WTC11 (cell line): ENCODE measurements at regions of chr22 and their contacts with region 1.

Region 1: DNA sequence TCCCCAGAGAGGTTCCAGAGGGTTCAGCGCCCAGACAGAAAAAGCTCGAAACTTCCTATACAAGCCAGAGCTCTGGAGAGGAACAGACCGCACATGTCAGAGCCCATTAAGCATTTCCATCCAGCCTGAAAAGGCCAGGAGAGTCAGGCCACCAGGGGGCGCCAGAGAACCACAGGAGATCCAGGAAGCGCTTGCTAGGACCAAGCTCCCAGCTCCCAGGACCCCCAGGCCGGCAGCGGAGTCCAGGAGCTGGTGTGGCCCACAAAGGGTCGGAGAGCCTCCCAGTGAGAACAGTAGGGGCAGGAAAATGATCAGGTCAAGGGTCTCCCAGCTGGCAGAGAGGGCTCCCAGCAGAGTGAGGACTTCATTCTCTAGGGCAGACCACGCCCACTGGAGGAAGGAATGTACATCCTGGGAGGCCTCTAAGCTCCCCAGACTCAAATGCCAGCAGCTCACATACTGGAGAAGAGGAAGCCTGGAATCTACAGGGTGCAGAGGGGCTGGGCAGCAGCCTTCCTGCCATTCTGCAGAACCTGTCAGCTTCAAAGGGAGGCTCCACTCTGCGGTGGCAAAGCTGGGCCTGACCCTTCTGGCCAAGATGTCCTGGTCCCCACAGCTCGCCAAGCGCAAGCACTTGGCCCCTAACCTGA is 2.1 kb upstream of the MEI1 start:
- DNase-seq: peak; percentile 98
- ATAC-seq: peak; percentile 87
- H3K4me3 Mint-ChIP-seq: peak overlapping the region; percentile 52
- H3K27ac Mint-ChIP-seq: no peak overlapping the region
- H3K4me1 Mint-ChIP-seq: peaks cover 10% of the 10 kb centered on the region
- H3K27me3 Mint-ChIP-seq: peaks cover 28% of the 10 kb centered on the region
- CTCF ChIP-seq: peak; percentile 99

Region 2: DNA sequence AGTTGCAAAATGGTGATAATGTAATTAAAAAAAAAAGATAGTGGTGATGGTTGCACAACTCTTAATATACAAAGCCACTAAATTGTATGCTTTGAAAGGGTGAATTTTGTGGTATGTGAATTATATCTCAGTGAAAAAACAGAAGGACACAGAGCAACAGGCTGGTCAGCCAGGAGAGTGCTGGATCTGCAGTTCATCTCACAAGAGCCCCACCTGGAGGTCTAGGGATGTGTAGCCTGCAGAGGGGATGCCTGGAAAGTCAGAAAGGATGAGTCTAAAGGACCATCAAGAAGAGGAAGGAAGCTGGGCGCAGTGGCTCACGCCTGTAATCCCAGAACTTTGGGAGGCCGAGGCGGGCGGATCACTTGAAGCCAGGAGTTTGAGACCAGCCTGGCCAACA is 162.0 kb before region 1 on chr22:
- CTCF ChIA-PET with region 1: no interaction called
- POLR2A ChIA-PET with region 1: no interaction called
- DNase-seq: peak; percentile 42
- ATAC-seq: peak; percentile 62
- H3K4me3 Mint-ChIP-seq: no peak overlapping the region
- H3K27ac Mint-ChIP-seq: no peak overlapping the region
- H3K4me1 Mint-ChIP-seq: peaks cover 11% of the 10 kb centered on the region
- H3K27me3 Mint-ChIP-seq: no peaks in the 10 kb centered on the region
- CTCF ChIP-seq: no peak

Region 3: DNA sequence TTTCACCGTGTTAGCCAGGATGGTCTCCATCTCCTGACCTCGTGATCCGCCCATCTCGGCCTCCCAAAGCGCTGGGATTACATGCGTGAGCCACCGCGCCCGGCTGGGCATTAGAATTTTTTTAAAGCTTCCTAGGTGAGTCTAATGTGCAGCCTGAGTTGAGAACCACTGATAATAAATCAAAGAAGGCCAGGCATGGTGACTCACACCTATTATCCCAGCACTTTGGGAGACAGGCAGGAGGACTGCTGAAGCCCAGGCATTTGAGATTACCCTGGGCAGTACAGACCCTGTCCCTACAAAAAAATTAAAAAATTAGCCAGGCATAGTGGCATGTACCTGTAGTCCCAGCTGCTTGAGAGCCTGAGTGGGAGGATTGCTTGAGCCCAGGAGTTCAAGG is 15.8 kb after region 1 on chr22:
- CTCF ChIA-PET with region 1: interaction called, 25 read pairs
- POLR2A ChIA-PET with region 1: interaction called, 3 read pairs
- DNase-seq: no peak
- ATAC-seq: no peak
- H3K4me3 Mint-ChIP-seq: no peak overlapping the region
- H3K27ac Mint-ChIP-seq: no peak overlapping the region
- H3K4me1 Mint-ChIP-seq: no peaks in the 10 kb centered on the region
- H3K27me3 Mint-ChIP-seq: peaks cover 31% of the 10 kb centered on the region
- CTCF ChIP-seq: no peak

Region 4: DNA sequence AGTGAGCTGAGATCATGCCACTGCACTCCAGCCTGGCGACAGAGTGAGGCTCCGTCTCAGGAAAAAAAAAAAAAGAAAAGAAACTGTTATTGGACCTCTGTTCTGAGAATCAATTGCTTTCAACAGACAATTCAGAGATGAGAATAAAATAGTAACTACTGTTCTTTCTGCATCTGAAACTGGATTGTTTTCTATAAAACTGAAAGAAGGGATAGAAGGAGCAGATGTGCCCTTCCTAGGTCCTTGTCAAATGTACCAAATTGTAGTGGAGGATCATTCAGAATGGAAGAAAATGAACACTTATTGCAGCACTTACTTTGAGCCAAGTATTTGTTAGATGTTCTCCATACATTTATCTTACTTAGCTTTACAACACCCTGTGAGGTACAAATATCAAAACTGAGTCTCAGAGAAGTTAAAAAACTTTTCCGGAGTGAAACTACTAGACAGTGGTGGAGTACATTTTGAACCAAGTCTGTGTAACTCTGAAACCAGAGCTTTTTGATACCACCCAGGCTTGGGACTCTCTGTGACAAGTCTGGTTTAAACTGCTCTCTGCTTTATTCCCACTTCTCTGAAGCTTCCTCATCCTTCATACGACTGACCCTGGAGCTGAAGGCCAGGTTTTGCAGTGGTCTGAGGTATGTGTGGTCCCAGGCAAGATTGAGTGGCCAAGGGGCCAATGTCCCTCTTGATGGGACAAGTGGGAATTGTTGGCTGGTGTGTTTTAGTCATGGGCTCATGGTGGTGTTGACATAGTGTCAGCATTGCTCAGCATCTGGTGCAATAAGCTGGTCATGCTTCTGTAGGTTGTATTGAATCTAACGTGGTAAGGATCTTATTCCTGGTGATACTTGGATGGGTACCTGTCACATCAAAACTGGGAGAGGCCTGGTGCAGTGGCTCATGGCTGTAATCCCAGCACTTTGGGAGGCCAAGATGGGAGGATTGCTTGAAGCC is 55.0 kb after region 1 on chr22:
- CTCF ChIA-PET with region 1: interaction called, 69 read pairs
- POLR2A ChIA-PET with region 1: no interaction called
- DNase-seq: no peak
- ATAC-seq: no peak
- H3K4me3 Mint-ChIP-seq: no peak overlapping the region
- H3K27ac Mint-ChIP-seq: no peak overlapping the region
- H3K4me1 Mint-ChIP-seq: peaks cover 14% of the 10 kb centered on the region
- H3K27me3 Mint-ChIP-seq: no peaks in the 10 kb centered on the region; the same call in 1 of the 2 replicates
- CTCF ChIP-seq: no peak

Region 5: GRCh38 chr22:41800348-41801146 is 103.3 kb after region 1 on chr22 and contains the start of gene CCDC134:
- CTCF ChIA-PET with region 1: interaction called, 76 read pairs
- POLR2A ChIA-PET with region 1: interaction called, 8 read pairs
- DNase-seq: peak; percentile 91
- ATAC-seq: peak; percentile 95
- H3K4me3 Mint-ChIP-seq: peak within 1 kb of the TSS; percentile 96
- H3K27ac Mint-ChIP-seq: peak within 1 kb of the TSS; percentile 98
- H3K4me1 Mint-ChIP-seq: peaks cover 30% of the 10 kb centered on the region
- H3K27me3 Mint-ChIP-seq: no peaks in the 10 kb centered on the region
- CTCF ChIP-seq: no peak
- total RNA-seq, gene CCDC134: 19.0 to 21.3 TPM (median 19.2 TPM) in 3 replicates

Region 6: DNA sequence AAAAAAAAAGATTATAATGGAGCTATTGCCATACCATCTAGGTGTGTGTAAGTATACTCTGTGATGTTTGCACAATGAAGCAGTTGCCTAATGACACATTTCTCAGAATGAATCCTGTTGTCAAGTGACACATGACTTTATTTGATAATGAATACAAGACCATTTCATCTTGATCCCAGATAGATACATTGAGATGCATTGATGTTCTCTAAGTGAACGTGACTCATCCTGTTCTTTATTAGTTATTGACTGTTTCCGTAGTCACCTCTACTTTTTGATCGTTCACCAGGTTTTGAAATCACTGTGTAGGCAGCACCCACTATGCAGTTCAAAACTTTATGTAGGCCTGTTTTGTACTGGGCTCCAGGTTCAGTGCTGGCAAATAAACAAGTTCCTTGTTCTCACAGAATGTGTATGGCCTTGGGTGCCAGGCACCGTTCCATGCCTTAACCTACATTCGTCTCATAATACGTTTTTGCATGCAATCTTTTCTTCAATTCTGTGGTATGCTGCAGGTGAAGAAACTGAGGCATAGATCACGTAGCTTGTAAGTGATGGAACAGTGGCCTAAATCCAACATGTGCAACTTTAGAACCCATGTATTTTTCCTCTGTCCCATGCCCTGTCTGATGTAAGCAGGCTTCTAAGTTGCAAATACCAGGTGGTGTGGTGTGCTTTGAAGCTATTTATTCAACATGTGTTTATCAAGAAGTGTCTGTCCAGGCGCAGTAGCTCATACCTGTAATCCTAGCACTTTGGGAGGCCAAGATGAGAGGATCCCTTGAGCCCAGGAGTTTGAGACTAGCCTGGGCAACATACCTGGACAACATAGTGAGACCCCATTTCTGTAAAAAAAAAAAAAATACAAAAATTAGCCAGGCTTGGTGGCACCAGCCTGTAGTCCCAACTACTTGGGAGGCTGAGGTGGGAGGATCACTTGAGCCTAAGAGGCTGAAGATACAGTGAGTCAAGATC is 146.0 kb after region 1 on chr22:
- CTCF ChIA-PET with region 1: interaction called, 10 read pairs
- POLR2A ChIA-PET with region 1: no interaction called
- DNase-seq: no peak
- ATAC-seq: no peak
- H3K4me3 Mint-ChIP-seq: no peak overlapping the region
- H3K27ac Mint-ChIP-seq: peak overlapping the region; percentile 17; the same call in 1 of the 2 replicates
- H3K4me1 Mint-ChIP-seq: peaks cover 65% of the 10 kb centered on the region
- H3K27me3 Mint-ChIP-seq: no peaks in the 10 kb centered on the region
- CTCF ChIP-seq: no peak

Region 7: DNA sequence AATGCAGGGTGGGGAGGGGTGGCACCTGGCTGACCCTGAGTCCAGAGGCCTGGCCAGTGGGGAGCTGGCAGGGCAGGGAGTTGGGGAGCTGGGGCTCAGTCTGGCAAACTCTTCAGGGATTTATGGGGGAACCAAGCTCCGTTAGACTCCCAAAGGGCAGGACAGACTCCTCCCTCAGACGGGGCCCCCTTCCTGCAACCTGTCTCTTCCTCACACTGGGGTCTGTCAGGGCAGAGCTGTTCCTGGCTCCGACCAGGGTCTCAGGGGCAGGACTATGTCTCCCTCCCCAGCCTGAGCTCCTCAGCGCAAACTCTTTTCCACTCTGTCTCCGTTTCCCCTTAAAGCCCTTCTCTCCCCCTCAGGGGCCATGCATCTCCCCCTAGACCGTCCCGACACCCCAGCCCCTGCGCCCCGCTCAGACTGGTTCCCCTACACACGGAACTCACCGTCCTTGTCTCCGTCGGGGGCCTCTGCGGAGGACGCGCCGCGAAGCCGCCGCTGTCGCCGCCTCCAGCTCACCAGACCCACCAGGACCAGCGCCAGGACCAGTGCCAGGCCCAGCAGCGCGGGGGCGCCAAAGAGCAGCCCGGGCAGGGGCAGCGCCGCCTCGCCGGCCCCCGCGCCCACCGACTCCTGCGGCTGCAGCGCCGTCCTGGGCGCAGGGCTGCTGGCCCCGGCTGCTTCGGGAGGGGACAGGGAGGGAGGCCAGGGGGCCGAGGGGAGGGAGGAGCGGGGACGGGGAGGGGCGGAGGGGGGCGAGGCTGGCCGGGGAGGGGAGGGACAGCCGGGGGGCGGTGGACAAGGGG is 228.6 kb after region 1 on chr22:
- CTCF ChIA-PET with region 1: interaction called, 65 read pairs
- POLR2A ChIA-PET with region 1: no interaction called
- DNase-seq: peak; percentile 91
- ATAC-seq: peak; percentile 80
- H3K4me3 Mint-ChIP-seq: peak overlapping the region; percentile 67
- H3K27ac Mint-ChIP-seq: no peak overlapping the region
- H3K4me1 Mint-ChIP-seq: peaks cover 16% of the 10 kb centered on the region
- H3K27me3 Mint-ChIP-seq: peaks cover 87% of the 10 kb centered on the region
- CTCF ChIP-seq: peak; percentile 85

Region 8: GRCh38 chr22:42116848-42117424 is 419.7 kb after region 1 on chr22:
- CTCF ChIA-PET with region 1: interaction called, 10 read pairs
- POLR2A ChIA-PET with region 1: no interaction called
- DNase-seq: peak; percentile 62
- ATAC-seq: peak; percentile 72
- H3K4me3 Mint-ChIP-seq: no peak overlapping the region
- H3K27ac Mint-ChIP-seq: no peak overlapping the region
- H3K4me1 Mint-ChIP-seq: peaks cover 11% of the 10 kb centered on the region
- H3K27me3 Mint-ChIP-seq: peaks cover 31% of the 10 kb centered on the region
- CTCF ChIP-seq: no peak